MCF 10A (cell line): ENCODE measurements at regions of chr1 and their contacts with region 1.

Region 1: DNA sequence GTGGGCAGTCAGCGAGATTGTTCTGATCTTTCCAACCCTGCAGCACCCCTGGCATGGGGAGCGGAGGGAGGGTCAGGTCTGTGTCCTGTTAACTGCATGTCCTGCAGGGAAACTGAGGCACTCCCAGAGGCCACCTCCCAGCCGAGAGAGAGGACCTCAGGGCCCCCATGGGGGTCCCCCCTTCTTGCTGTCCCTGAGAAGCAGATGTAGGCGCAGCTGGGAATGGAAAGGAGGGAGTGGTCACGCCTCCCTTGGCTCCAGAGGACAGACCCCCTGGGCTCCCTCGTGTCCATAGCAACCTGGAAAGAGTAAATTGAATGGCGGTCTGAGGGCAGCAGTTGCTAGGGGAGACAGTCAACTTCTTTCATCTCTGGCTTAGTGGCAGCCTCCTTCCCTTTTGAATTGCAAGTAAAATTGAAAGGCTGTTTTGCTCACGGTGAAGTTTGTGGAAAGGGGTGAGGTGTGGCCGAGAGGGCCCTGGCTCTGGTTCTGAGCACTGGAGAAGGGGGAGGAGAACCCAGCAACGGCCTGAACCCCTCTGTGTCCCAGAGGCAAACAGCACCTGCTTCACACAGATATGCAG is 4.9 kb downstream of the CROCC start:
- DNase-seq: no peak
- H3K4me3 Mint-ChIP-seq: no peak overlapping the region
- H3K27ac Mint-ChIP-seq: peak overlapping the region; percentile 36
- H3K4me1 Mint-ChIP-seq: peaks cover 35% of the 10 kb centered on the region
- H3K27me3 Mint-ChIP-seq: no peaks in the 10 kb centered on the region
- CTCF ChIP-seq: no peak

Region 2: GRCh38 chr1:16913833-16914662 is 12.5 kb before region 1 on chr1:
- CTCF ChIA-PET with region 1: interaction called, 8 read pairs
- POLR2A ChIA-PET with region 1: interaction called, 17 read pairs
- intact Hi-C with region 1: no loop called
- DNase-seq: peak; percentile 89
- H3K4me3 Mint-ChIP-seq: peak overlapping the region; percentile 77
- H3K27ac Mint-ChIP-seq: peak overlapping the region; percentile 80
- H3K4me1 Mint-ChIP-seq: peaks cover 18% of the 10 kb centered on the region
- H3K27me3 Mint-ChIP-seq: no peaks in the 10 kb centered on the region
- CTCF ChIP-seq: peak; percentile 10

Region 3: DNA sequence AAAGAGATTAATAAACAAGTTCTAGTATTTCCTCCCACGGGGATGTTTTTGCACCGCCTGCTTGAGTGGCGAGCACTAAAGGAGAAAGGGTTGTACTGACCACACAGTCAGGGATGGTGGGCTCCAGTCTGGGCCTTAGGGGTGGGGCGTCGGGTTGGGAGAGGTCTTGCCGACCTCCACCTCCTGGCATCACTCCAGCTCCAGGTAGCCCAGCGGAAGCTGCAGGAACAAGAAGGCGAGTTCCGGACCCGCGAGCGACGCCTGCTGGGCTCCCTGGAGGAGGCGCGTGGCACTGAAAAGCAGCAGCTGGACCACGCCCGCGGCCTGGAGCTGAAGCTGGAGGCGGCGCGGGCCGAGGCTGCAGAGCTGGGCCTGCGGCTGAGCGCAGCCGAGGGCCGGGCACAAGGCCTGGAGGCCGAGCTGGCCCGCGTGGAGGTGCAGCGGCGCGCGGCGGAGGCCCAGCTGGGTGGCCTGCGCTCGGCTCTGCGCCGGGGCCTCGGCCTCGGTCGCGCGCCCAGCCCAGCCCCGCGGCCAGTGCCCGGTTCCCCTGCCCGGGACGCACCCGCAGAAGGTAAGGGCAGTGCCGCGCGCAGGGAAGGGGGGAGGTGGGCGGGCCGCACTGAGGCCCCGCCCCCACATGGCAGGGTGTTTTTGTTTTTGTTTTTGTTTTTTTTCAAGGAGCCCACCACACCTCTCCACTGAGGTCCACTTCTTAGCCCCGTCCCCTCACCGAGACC is 34.1 kb after region 1 on chr1:
- CTCF ChIA-PET with region 1: no interaction called
- POLR2A ChIA-PET with region 1: no interaction called
- intact Hi-C with region 1: no loop called
- DNase-seq: no peak
- H3K4me3 Mint-ChIP-seq: no peak overlapping the region
- H3K27ac Mint-ChIP-seq: no peak overlapping the region
- H3K4me1 Mint-ChIP-seq: no peaks in the 10 kb centered on the region
- H3K27me3 Mint-ChIP-seq: no peaks in the 10 kb centered on the region
- CTCF ChIP-seq: no peak

Region 4: DNA sequence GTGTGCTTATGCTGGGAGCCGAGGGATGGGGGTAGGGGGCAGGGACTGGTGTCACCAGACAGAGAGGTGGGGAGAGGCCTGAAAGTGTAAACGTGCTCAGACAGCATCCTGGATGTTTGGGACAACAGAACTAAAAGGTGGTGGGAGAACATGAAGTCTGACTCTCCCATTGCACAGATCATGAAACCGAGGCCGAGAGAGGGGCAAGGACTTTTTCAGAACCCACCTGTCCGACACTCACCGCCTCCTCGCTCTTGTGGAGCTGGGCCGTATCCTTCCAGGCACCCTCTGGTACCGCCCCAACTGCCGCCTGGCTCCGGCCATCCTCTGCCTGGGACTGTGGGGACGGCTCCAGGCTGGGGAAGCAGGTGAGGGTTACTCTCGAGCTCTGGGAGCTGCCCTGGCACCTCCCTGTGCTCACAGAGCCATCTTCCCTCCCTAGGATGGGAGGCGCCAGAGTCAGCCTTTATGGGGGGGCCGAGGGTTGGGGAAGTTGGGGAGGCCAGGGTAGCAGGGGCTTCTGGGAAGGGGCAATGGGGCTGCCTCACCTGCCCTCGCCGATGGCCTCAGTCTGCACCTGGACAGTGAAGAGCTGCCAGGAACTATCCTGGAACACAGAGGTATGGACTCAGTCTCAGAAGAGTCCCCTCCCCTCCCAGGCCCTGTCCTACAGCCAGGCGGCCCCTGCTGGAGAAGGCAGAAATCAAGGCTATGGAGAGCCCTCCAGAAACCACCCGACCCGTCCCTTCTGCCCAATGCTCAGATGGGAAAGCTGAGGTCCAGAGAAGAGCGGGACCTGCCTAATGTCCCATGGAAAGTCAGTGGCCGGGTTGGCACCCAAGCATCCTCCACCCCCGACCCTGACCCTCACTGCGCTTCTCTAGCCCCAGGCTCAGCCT is 78.1 kb after region 1 on chr1:
- CTCF ChIA-PET with region 1: no interaction called
- POLR2A ChIA-PET with region 1: no interaction called
- intact Hi-C with region 1: no loop called
- DNase-seq: no peak
- H3K4me3 Mint-ChIP-seq: no peak overlapping the region
- H3K27ac Mint-ChIP-seq: peak overlapping the region; percentile 54
- H3K4me1 Mint-ChIP-seq: peaks cover 8% of the 10 kb centered on the region
- H3K27me3 Mint-ChIP-seq: no peaks in the 10 kb centered on the region
- CTCF ChIP-seq: no peak